ENCODE measurements at regions of chr20 and their contacts with region 1.

Region 1: DNA sequence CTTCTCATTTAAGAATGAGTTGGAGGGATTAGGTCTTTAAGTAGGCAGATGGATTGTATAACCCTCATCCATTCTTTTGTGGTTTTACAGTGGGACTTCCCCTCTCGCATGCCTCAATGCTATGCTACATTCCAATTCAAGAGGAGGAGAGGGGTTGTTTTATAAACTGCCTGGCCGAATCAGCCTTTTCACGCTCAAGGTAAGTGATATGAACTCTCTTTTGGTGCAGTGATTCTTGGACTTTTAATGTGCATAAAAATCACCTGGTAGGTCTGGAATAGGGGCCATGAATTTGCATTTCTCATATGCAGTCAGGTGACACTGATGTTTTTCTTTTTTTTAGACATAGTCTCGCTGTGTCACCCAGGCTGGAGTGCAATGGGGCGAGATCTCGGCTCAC is 10.8 kb downstream of the ASXL1 start:
- DNase-seq: no peak
- H3K4me3 Mint-ChIP-seq: no peak overlapping the region
- H3K27ac Mint-ChIP-seq: no peak overlapping the region
- H3K4me1 Mint-ChIP-seq: peaks cover 45% of the 10 kb centered on the region
- H3K27me3 Mint-ChIP-seq: no peaks in the 10 kb centered on the region

Region 2: DNA sequence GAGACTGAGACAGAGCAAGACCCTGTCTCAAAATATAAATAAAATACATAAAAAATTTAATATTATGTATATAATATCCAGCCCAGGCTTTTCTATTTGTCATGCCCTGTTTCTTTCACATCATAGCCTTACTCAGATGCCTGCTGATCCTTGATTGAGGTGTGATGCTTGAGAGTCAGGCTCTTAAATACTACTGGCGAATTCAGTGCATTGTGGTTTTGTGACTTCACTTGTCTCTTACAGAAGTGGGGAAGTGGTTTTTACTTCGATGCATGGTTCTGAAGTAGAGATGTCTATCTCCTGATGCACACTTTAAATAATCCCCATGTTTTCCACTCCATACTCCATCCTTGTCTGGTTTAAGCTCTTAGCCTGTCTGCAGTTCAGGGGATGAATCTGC is 18.3 kb after region 1 on chr20:
- CTCF ChIA-PET with region 1: interaction called, 3 read pairs
- POLR2A ChIA-PET with region 1: no interaction called
- intact Hi-C with region 1: loop called (anchors 2 kb)
- DNase-seq: peak; percentile 31
- H3K4me3 Mint-ChIP-seq: no peak overlapping the region
- H3K27ac Mint-ChIP-seq: no peak overlapping the region
- H3K4me1 Mint-ChIP-seq: peaks cover 58% of the 10 kb centered on the region
- H3K27me3 Mint-ChIP-seq: no peaks in the 10 kb centered on the region

Region 3: DNA sequence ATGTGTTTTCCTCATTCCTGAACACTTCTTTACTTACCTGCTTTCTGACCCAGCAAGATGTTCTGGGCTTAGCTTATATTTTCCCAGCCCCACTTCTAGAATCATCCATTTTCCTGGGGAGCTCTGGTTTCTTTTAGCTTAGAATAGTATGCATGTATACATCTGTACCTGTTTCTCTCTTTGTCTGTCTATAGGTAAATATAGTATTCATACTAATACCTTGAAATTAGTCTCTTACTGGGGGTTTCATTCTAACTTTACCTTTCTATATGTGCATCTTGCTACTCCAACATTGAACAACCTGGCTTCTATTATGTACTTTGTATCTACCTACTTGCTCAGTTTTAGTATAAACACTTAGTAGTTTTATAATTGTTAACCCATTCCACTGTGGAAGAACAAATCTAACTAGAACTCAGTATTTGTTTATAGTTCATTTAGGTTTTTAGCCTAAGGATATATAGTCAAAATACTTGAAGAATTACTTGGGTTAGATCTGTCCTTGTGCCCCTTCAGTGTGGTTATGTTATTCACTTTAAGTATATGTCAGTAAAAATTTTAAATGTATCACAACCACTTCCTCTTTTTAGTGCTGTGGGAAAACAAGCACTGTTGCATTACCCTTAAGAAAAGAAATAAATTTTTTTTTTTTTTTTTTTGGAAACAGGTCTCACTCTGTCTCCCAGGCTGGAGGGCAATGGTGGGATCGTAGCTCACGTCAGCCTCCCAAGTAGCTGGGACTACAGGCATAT is 43.2 kb after region 1 on chr20:
- CTCF ChIA-PET with region 1: no interaction called
- POLR2A ChIA-PET with region 1: no interaction called
- intact Hi-C with region 1: no loop called
- DNase-seq: no peak
- H3K4me3 Mint-ChIP-seq: no peak overlapping the region
- H3K27ac Mint-ChIP-seq: no peak overlapping the region
- H3K4me1 Mint-ChIP-seq: peaks cover 50% of the 10 kb centered on the region
- H3K27me3 Mint-ChIP-seq: no peaks in the 10 kb centered on the region